Mammary epithelial cell (primary cell): ENCODE measurements at regions of chr12 and their contacts with region 1.

Region 1: GRCh38 chr12:118271790-118272417 is 100.8 kb downstream of the TAOK3 start:
- DNase-seq: peak; percentile 83
- H3K4me3 ChIP-seq: peak overlapping the region in 2 of 3 experiments; percentile 24 to 40
- H3K27ac ChIP-seq: peak overlapping the region; percentile 77
- H3K4me1 ChIP-seq: peaks cover 16% of the 10 kb centered on the region
- H3K27me3 ChIP-seq: no peaks in the 10 kb centered on the region
- CTCF ChIP-seq: no peak

Region 2: DNA sequence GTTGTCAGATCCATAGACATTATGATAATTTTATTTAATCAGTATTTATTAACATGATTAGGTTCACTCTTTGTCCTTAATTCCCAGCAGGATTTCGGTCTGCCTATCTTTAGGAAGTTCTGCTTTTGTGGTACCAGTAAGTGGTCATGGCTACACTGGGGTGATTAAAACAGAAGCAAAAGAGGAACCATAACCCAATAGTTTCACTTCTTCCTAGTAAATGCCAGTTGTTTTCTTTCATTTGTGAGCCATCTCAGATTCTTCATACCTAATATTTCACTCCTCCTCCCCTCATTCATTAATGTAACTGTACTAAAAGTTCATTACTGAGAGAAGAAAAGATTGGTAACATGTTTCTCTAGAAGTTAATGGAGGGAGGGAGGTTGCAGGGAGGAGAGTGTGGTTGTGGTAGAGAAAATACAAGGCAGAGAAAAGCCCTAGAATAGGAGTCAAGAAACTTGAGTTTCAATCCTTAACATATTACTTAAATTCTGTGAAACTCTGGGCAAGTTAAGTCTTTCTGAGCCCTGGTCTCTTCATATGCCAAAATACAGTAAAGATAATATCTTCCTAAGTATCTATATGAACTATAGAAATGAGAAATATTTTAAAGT is 34.7 kb before region 1 on chr12:
- CTCF ChIA-PET with region 1: no interaction called
- dilution Hi-C with region 1: no loop called
- in situ Hi-C with region 1: no loop called
- intact Hi-C with region 1: loop called (anchors 5 kb)
- DNase-seq: no peak
- H3K4me3 ChIP-seq: no peak overlapping the region
- H3K27ac ChIP-seq: peak overlapping the region; percentile 67
- H3K4me1 ChIP-seq: peaks cover 23% of the 10 kb centered on the region
- H3K27me3 ChIP-seq: no peaks in the 10 kb centered on the region
- CTCF ChIP-seq: no peak

Region 3: DNA sequence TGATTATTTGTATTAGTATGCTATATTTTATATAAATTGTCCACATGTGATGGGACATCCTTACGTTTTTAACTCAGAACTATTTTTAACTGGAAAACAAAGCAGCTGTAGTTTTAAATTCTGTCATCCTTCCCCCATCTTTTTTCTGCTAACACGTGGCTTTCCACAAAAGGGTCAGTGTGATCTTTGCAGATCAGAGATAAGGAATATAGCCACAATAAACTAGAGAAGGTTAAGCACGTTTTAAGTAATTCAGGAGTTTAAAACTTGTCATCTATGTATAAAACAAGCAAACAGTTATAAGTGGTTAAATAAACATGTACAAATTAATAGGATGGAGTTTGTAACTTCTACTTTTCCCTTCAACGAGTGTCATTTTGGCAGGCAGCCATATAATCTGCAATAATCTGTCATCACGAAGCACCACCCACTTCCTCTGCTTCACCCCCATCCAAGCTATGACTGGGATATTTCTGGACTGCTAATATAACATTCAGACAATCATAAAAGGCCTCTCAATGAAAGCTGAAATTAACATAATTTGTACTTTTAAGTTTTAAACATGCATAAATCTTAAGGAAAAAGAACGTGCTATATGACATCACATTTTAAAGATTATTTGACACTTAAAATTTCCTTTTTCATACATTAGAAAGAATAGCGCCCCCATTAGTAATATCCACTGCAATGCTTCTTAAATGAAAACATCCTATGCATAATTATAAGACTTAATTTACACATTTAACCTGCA is 85.5 kb after region 1 on chr12:
- CTCF ChIA-PET with region 1: no interaction called
- dilution Hi-C with region 1: no loop called
- in situ Hi-C with region 1: loop called in 1 of 2 experiments (anchors 25 kb)
- intact Hi-C with region 1: loop called (anchors 5 kb)
- DNase-seq: peak; percentile 54
- H3K4me3 ChIP-seq: no peak overlapping the region
- H3K27ac ChIP-seq: peak overlapping the region; percentile 94
- H3K4me1 ChIP-seq: peaks cover 28% of the 10 kb centered on the region
- H3K27me3 ChIP-seq: no peaks in the 10 kb centered on the region
- CTCF ChIP-seq: peak in 1 of 2 donors; percentile 15

Region 4: DNA sequence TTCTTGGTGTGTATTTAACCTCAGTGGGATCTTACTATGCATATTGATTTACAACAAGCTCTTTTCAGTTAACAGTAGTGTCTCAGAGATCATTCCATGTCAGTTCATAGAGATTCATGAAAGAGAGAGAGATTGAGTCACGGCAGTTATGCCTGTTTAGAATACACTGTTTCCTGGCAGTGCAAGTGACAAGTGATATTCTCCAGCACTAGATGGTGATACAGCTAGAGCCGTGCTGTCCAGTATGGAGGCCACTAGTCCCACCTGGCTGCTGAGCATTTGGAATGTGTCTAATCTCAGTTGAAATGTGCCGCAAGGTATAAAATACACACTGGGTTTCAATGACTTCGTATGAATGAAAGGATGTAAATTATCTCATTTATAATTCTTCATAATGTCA is 288.8 kb after region 1 on chr12:
- CTCF ChIA-PET with region 1: no interaction called
- dilution Hi-C with region 1: no loop called
- in situ Hi-C with region 1: no loop called
- intact Hi-C with region 1: no loop called
- DNase-seq: no peak
- H3K4me3 ChIP-seq: no peak overlapping the region
- H3K27ac ChIP-seq: no peak overlapping the region
- H3K4me1 ChIP-seq: no peaks in the 10 kb centered on the region
- H3K27me3 ChIP-seq: no peaks in the 10 kb centered on the region
- CTCF ChIP-seq: no peak